ENCODE measurements at regions of chr14 and their contacts with region 1.

Region 1: GRCh38 chr14:104708606-104709268 is 15.3 kb upstream of the ADSS1 start:
- DNase-seq: no peak
- ATAC-seq: peak; percentile 78
- H3K4me3 ChIP-seq: no peak overlapping the region
- H3K27ac ChIP-seq: peak overlapping the region; percentile 26; the same call in 1 of the 2 replicates
- H3K4me1 ChIP-seq: peaks cover 0 to 10% of the 10 kb centered on the region in 2 experiments; a peak in 2 of 4 replicates
- H3K27me3 ChIP-seq: no peaks in the 10 kb centered on the region
- CTCF ChIP-seq: peak; percentile 90 to 96 (median 94)
- POLR2A ChIP-seq: no peak
- RAD21 ChIP-seq: peak; percentile 90

Region 2: GRCh38 chr14:104650057-104650981 is 58.4 kb before region 1 on chr14:
- CTCF ChIA-PET with region 1: no interaction called
- POLR2A ChIA-PET with region 1: no interaction called
- RAD21 ChIA-PET with region 1: no interaction called
- intact Hi-C with region 1: loop called (anchors 1 kb)
- DNase-seq: no peak
- ATAC-seq: peak; percentile 94
- H3K4me3 ChIP-seq: peak overlapping the region in 1 of 2 experiments; percentile 20; a peak in 1 of 4 replicates
- H3K27ac ChIP-seq: no peak overlapping the region
- H3K4me1 ChIP-seq: peaks cover 0 to 10% of the 10 kb centered on the region in 2 experiments; a peak in 1 of 4 replicates
- H3K27me3 ChIP-seq: no peaks in the 10 kb centered on the region
- CTCF ChIP-seq: peak; percentile 94 to 98 (median 97)
- POLR2A ChIP-seq: no peak
- RAD21 ChIP-seq: peak; percentile 92

Region 3: GRCh38 chr14:104665657-104666522 is 42.8 kb before region 1 on chr14:
- CTCF ChIA-PET with region 1: interaction called, 4 read pairs
- POLR2A ChIA-PET with region 1: interaction called, 3 read pairs
- RAD21 ChIA-PET with region 1: no interaction called
- intact Hi-C with region 1: loop called (anchors 1 kb)
- DNase-seq: peak; percentile 91
- ATAC-seq: peak; percentile 84
- H3K4me3 ChIP-seq: peak overlapping the region; percentile 22 to 29
- H3K27ac ChIP-seq: peak overlapping the region; percentile 73
- H3K4me1 ChIP-seq: peaks cover 37 to 43% of the 10 kb centered on the region in 2 experiments
- H3K27me3 ChIP-seq: no peaks in the 10 kb centered on the region
- CTCF ChIP-seq: peak; percentile 58 to 76 (median 71); a peak in 5 of 6 replicates
- POLR2A ChIP-seq: no peak
- RAD21 ChIP-seq: peak; percentile 78

Region 4: DNA sequence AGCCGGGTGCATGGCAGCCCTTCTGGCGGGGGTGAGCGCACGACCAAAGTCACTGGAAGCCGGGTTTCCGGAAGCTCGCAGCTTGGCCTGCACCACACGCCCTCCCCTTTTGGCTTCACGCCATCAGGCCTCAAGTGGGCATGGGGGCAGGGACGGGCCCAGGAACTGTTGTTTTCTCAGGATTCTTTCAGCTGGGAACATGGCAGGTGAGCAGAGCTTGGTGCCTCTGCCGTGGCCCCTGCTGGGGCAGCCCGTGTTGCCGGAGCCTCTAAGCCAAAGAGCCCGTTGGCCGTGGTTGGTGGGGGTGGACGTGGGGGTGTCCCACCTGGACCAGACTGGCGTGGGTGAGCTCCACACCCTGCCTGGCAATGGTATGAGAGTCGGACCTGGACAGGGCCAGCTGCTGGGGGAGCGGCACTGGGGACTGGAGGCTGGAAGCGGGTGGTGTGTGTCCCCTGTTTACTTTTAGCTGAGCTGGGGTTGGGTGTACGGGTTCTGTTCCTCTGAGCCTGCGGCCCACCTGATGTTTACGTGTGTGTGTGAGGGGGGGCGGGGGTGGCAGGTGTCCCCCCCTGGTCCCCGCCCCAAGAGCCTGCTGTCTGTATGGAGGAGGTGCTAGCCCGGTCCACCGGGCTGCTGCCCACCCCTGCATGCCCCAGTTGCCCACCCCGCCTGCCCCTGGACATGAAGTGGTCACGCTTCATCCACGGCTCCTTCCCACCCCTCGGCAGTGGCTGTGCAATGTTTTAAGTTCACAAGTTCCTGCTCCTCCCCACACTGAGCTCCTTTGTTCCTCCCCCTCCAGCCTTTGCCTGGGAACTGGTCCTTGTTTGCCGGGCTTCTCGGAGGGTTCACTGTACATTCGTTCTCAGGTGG is 187.3 kb after region 1 on chr14:
- CTCF ChIA-PET with region 1: no interaction called
- POLR2A ChIA-PET with region 1: no interaction called
- RAD21 ChIA-PET with region 1: no interaction called
- intact Hi-C with region 1: no loop called
- DNase-seq: no peak
- ATAC-seq: peak; percentile 28
- H3K4me3 ChIP-seq: no peak overlapping the region
- H3K27ac ChIP-seq: no peak overlapping the region
- H3K4me1 ChIP-seq: peaks cover 0 to 8% of the 10 kb centered on the region in 2 experiments; a peak in 1 of 4 replicates
- H3K27me3 ChIP-seq: no peaks in the 10 kb centered on the region
- CTCF ChIP-seq: no peak
- POLR2A ChIP-seq: no peak
- RAD21 ChIP-seq: no peak

Region 5: DNA sequence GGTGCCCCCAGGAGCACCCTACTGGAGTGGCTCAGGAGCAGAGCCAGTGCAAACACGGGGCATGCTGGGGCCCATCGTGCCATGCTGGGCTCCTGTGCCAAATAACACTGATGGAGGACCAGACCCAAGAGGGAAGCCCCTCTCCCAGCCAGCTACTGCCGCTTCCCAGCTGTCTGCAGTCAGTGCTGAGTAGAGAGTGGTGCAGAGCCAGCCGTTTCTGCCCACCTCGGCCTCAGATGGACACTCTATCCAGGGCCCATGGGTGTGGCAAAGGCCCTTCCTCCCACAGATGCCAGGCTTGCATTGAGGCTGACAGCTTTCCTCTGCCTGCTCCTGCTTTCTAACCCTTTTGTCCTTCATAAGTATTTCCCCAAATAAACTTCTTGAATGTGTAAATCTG is 290.1 kb after region 1 on chr14:
- CTCF ChIA-PET with region 1: no interaction called
- POLR2A ChIA-PET with region 1: no interaction called
- RAD21 ChIA-PET with region 1: no interaction called
- intact Hi-C with region 1: no loop called
- DNase-seq: no peak
- ATAC-seq: no peak
- H3K4me3 ChIP-seq: no peak overlapping the region
- H3K27ac ChIP-seq: no peak overlapping the region
- H3K4me1 ChIP-seq: no peaks in the 10 kb centered on the region
- H3K27me3 ChIP-seq: no peaks in the 10 kb centered on the region
- CTCF ChIP-seq: no peak
- POLR2A ChIP-seq: no peak
- RAD21 ChIP-seq: no peak

Measured in HCT116 (cell line).